CD8-positive, alpha-beta T cell (primary cell): ENCODE measurements at regions of chr9 and their contacts with region 1.

Region 1: GRCh38 chr9:97906236-97906831 is 16.0 kb downstream of the TRMO start:
- DNase-seq: peak in 4 of 9 experiments; percentile 56 to 78 (median 68)
- ATAC-seq: peak; percentile 26
- H3K4me3 ChIP-seq: peak overlapping the region; percentile 4 to 34
- H3K4me3 Mint-ChIP-seq: peak overlapping the region; percentile 80
- H3K27ac ChIP-seq: peak overlapping the region; percentile 54 to 79
- H3K27ac Mint-ChIP-seq: peak overlapping the region; percentile 97
- H3K4me1 ChIP-seq: peaks cover 92% of the 10 kb centered on the region
- H3K4me1 Mint-ChIP-seq: peaks cover 88% of the 10 kb centered on the region
- H3K27me3 ChIP-seq: no peaks in the 10 kb centered on the region
- H3K27me3 Mint-ChIP-seq: no peaks in the 10 kb centered on the region
- CTCF ChIP-seq: no peak

Region 2: DNA sequence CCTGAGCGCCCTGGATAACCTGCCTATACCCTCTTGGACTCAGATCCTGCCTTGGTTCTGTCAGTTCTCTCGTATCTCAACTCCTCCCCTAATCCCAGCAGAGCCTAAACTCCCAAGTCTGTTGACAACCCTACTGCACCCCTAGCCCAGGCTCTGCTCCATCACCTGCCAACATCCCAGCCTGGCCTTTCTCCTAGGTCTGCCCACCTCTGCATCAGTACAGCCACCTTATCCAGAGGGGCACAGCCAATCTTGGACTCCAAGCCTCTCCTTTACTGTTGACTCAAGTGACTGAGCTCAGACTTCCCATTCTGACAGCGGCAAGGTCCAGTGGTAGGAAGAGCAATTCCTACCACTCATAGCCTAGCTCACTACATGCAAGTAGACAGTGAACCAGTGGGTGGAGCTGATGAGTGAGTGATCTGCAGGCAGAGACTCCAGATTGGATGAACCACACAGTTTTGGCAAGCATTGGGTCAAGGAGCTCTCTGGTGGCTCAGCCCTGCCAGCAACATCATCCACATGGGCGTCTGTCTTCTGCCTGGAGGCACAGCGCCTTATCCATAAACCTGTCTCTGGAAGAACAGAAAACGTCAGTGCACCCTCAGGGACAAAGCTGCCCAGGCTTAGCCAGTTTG is 10.5 kb before region 1 on chr9:
- CTCF ChIA-PET with region 1: interaction called, 193 read pairs
- POLR2A ChIA-PET with region 1: interaction called, 7 read pairs
- intact Hi-C with region 1: loop called in 1 of 2 experiments (anchors 1 kb)
- DNase-seq: peak in 1 of 9 experiments; percentile 21
- ATAC-seq: peak; percentile 20
- H3K4me3 ChIP-seq: no peak overlapping the region
- H3K4me3 Mint-ChIP-seq: no peak overlapping the region
- H3K27ac ChIP-seq: no peak overlapping the region
- H3K27ac Mint-ChIP-seq: no peak overlapping the region
- H3K4me1 ChIP-seq: peaks cover 8% of the 10 kb centered on the region
- H3K4me1 Mint-ChIP-seq: peaks cover 15% of the 10 kb centered on the region
- H3K27me3 ChIP-seq: no peaks in the 10 kb centered on the region
- H3K27me3 Mint-ChIP-seq: no peaks in the 10 kb centered on the region
- CTCF ChIP-seq: no peak

Region 3: DNA sequence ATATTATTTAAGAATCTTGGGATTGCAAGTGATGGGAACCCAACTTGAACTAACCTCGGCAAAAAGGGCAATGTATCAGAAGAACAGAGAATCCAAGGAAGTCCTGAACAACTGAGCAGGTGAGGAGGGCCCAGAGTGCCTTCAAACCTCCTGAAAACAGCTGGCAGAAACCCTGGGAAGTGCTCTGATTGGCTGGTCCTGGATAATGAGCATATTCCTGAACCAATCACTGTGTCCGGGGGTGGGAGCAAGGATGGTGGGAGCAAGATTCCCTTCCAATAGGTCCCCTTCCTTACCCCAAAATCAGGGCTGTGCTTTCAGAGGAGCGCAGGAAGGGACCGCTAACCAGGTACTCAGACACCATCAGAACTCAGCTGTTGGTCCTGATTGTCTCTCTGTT is 381.0 kb after region 1 on chr9:
- CTCF ChIA-PET with region 1: no interaction called
- POLR2A ChIA-PET with region 1: no interaction called
- intact Hi-C with region 1: no loop called
- DNase-seq: no peak
- ATAC-seq: no peak
- H3K4me3 ChIP-seq: no peak overlapping the region
- H3K4me3 Mint-ChIP-seq: no peak overlapping the region
- H3K27ac ChIP-seq: no peak overlapping the region
- H3K27ac Mint-ChIP-seq: no peak overlapping the region
- H3K4me1 ChIP-seq: no peaks in the 10 kb centered on the region
- H3K4me1 Mint-ChIP-seq: no peaks in the 10 kb centered on the region
- H3K27me3 ChIP-seq: no peaks in the 10 kb centered on the region
- H3K27me3 Mint-ChIP-seq: peaks cover 10% of the 10 kb centered on the region
- CTCF ChIP-seq: no peak